ENCODE measurements at regions of chr3 and their contacts with region 1.

Region 1: DNA sequence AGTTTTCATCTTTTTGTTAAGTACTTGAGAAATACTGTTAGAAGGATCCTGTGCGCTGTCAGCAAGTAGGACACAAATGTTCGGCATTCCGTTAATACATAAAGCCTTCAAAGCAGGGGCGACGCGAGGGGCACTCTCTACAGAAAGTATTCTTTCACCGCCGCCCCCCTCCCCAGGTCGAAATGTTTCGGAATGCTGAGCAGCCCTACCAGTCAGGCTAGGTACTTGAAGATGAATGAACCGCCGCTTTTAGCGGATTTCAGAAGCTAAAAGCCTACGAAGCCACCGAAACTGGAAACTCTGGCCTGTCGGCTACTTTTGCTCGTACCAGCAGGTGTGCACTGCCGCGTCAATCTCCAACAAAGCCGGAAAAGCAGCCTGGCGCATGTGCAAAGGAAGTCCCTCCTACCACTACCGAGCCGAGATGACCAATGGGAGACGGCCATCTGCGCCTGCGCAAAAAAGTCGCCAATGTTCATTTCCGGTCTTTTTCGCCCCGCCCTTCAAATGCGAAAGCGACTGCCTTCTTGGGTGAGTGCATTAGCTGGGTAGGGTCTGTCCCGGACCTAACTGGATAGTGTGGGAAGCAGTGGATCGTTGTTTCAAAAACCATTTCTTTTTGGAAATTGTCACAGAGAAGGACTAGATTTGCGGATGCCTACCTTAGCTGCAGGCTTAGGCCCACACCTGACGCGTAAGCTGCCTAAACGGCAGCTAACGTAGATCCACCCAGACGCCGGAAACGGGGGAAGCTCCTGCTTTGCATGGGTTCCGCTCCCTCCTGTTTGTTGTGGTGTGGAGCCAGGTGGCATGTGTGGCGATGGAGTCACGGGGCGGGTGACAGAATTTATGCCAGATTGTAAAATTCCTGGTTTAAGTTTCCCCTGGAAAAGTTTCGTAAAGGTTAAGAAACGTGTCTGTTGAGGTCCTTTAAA is at the start of gene WDR5B:
- DNase-seq: peak; percentile 99
- ATAC-seq: peak; percentile 91
- H3K4me3 Mint-ChIP-seq: peak within 1 kb of the TSS; percentile 96
- H3K27ac Mint-ChIP-seq: peak within 1 kb of the TSS; percentile 96
- H3K4me1 Mint-ChIP-seq: peaks cover 46% of the 10 kb centered on the region
- H3K27me3 Mint-ChIP-seq: no peaks in the 10 kb centered on the region
- total RNA-seq, gene WDR5B: 2.6 to 2.8 TPM

Region 2: DNA sequence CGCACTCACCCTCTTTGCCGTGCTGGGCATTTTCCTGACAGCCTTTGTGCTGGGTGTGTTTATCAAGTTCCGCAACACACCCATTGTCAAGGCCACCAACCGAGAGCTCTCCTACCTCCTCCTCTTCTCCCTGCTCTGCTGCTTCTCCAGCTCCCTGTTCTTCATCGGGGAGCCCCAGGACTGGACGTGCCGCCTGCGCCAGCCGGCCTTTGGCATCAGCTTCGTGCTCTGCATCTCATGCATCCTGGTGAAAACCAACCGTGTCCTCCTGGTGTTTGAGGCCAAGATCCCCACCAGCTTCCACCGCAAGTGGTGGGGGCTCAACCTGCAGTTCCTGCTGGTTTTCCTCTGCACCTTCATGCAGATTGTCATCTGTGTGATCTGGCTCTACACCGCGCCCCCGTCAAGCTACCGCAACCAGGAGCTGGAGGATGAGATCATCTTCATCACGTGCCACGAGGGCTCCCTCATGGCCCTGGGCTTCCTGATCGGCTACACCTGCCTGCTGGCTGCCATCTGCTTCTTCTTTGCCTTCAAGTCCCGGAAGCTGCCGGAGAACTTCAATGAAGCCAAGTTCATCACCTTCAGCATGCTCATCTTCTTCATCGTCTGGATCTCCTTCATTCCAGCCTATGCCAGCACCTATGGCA is 132.1 kb before region 1 on chr3:
- CTCF ChIA-PET with region 1: no interaction called
- POLR2A ChIA-PET with region 1: no interaction called
- intact Hi-C with region 1: no loop called
- DNase-seq: no peak
- ATAC-seq: no peak
- H3K4me3 Mint-ChIP-seq: no peak overlapping the region
- H3K27ac Mint-ChIP-seq: no peak overlapping the region
- H3K4me1 Mint-ChIP-seq: no peaks in the 10 kb centered on the region
- H3K27me3 Mint-ChIP-seq: peaks cover 2% of the 10 kb centered on the region

Region 3: GRCh38 chr3:122392868-122393844 is 22.8 kb before region 1 on chr3:
- CTCF ChIA-PET with region 1: interaction called, 22 read pairs
- POLR2A ChIA-PET with region 1: interaction called, 5 read pairs
- intact Hi-C with region 1: no loop called
- DNase-seq: no peak
- ATAC-seq: peak; percentile 55
- H3K4me3 Mint-ChIP-seq: no peak overlapping the region
- H3K27ac Mint-ChIP-seq: no peak overlapping the region
- H3K4me1 Mint-ChIP-seq: peaks cover 33% of the 10 kb centered on the region
- H3K27me3 Mint-ChIP-seq: no peaks in the 10 kb centered on the region

Region 4: DNA sequence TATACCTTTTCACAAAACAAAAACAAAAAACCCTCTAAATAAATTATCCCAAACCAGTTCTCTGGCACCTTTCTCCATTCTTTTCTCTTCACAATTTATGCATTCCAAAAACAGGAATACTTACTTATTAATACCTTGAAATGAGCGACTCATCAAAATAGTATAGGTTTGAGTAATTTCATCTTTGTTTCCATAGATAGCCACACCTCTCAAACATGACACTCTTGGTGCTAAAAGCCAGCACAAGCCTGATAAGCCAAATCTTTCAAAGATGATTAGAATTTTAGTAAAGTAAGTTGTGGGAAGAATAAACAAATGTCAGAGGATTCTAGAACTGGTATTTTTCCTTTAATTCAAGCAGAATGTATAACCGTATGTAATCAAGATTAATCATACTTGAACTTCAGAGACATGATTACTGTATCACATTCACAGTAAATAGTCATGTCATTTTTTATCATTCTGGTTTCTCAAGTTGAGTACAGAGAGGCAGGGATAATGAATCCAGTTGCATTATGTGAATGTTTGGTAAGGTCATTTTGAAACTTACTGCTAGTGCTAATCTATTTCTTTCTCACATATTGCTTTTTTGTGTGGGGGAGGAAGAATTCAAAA is 12.0 kb after region 1 on chr3:
- CTCF ChIA-PET with region 1: interaction called, 3 read pairs
- POLR2A ChIA-PET with region 1: no interaction called
- intact Hi-C with region 1: loop called in 1 of 2 experiments (anchors 1 kb)
- DNase-seq: no peak
- ATAC-seq: peak; percentile 93
- H3K4me3 Mint-ChIP-seq: no peak overlapping the region
- H3K27ac Mint-ChIP-seq: peak overlapping the region; percentile 70
- H3K4me1 Mint-ChIP-seq: peaks cover 18% of the 10 kb centered on the region
- H3K27me3 Mint-ChIP-seq: no peaks in the 10 kb centered on the region

Region 5: GRCh38 chr3:122564155-122564912 is 148.3 kb after region 1 on chr3 and contains the starts of genes DTX3L and PARP9:
- CTCF ChIA-PET with region 1: interaction called, 4 read pairs
- POLR2A ChIA-PET with region 1: no interaction called
- intact Hi-C with region 1: loop called in 1 of 2 experiments (anchors 1 kb)
- DNase-seq: peak; percentile 89
- ATAC-seq: peak; percentile 83
- H3K4me3 Mint-ChIP-seq: peak within 1 kb of the TSS; percentile 83
- H3K27ac Mint-ChIP-seq: peak within 1 kb of the TSS; percentile 97
- H3K4me1 Mint-ChIP-seq: peaks cover 67% of the 10 kb centered on the region
- H3K27me3 Mint-ChIP-seq: no peaks in the 10 kb centered on the region
- total RNA-seq, gene DTX3L: 42.0 to 52.0 TPM
- total RNA-seq, gene PARP9: 39.9 to 46.0 TPM

Measured in activated CD4-positive, alpha-beta T cell treated with anti-CD3 and anti-CD28 coated beads for 36 hours (primary cell).